Right cardiac atrium (tissue), 5 donors: ENCODE measurements at regions of chr17 and their contacts with region 1.

Region 1: DNA sequence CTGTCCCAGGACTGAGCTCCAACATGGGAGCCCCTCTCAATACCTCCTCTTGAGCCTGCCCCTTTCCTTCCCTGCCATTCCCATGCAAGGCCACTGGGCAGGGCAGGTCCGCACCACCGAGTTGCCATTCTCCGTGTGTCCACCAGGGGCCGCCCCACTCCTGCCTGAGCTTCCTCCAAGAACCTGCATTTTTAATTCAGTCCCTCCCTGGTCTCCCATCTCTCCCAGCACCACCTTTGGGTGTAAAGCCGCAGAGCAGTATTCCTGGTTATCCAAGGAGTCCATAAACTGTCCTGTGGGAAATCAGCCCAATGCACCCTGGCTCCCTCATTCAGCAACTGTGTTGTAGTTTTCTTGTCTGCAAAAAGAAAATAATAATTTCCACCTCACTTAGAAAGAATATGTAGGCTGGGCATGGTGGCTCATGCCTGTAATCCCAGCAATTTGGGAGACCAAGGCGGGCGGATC is 15.9 kb upstream of the ANKRD40CL start:
- DNase-seq: peak; percentile 81 to 94 (median 93)
- ATAC-seq: peak; percentile 82 to 89
- H3K4me3 ChIP-seq: no peak overlapping the region
- H3K27ac ChIP-seq: no peak overlapping the region
- H3K4me1 ChIP-seq: peaks cover 3% of the 10 kb centered on the region
- H3K27me3 ChIP-seq: no peaks in the 10 kb centered on the region

Region 2: DNA sequence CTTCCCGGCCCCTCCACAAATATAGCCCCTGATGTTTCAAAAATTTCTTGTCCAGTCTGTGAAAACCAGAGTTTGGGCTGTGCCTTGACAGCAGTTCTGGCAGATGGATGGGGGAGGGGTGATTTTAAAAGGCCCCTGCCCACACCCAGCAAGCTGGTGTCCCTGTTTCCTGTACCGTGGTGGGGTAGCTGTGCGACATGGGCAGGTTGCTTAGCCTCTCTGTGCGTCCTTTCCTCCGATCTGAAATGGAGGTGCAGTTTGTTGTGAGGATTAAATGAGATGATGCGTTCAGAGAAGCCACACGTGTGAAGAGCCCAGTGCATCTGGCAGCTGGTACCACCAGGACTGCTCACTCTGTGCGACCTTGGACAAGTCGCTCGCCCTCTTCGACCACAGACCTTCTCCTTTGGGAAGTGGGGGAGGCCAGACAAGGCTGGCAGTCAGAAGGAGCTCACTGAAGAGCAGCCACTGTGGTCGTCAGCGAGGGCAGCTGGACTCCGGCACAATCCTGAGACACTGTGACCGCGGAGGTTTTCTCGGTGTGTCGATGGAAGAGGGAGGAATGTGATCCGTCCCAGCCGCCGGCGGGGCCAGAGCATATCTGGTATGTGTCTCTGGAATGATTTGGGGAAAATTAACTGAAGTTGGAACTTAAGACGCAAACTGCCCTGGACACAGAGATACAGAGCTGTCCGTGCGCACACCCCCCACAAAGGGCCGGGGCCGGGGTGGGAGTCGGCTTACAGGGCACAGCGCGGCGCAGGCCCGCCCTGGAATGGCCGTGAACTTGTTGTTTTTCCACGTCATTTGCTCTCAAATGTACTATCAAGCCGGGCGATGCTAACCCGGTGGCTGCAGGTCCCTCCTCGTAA is 51.4 kb after region 1 on chr17:
- intact Hi-C with region 1: loop called in 1 of 4 experiments (anchors 2 kb)
- DNase-seq: peak in 1 of 3 donors; percentile 81
- ATAC-seq: peak; percentile 25 to 40
- H3K4me3 ChIP-seq: peak overlapping the region; percentile 25
- H3K27ac ChIP-seq: no peak overlapping the region
- H3K4me1 ChIP-seq: peaks cover 4% of the 10 kb centered on the region
- H3K27me3 ChIP-seq: no peaks in the 10 kb centered on the region

Region 3: GRCh38 chr17:50841949-50842354 is 58.7 kb after region 1 on chr17:
- intact Hi-C with region 1: loop called (anchors 2 to 5 kb)
- DNase-seq: peak; percentile 57 to 85 (median 84)
- ATAC-seq: peak; percentile 69 to 73
- H3K4me3 ChIP-seq: no peak overlapping the region
- H3K27ac ChIP-seq: no peak overlapping the region
- H3K4me1 ChIP-seq: peaks cover 2% of the 10 kb centered on the region
- H3K27me3 ChIP-seq: no peaks in the 10 kb centered on the region

Region 4: GRCh38 chr17:50949989-50950881 is 167.0 kb after region 1 on chr17:
- intact Hi-C with region 1: loop called in 2 of 4 experiments (anchors 5 to 10 kb)
- DNase-seq: peak; percentile 77 to 91 (median 89)
- ATAC-seq: peak; percentile 78 to 83
- H3K4me3 ChIP-seq: no peak overlapping the region
- H3K27ac ChIP-seq: peak overlapping the region; percentile 58
- H3K4me1 ChIP-seq: peaks cover 11% of the 10 kb centered on the region
- H3K27me3 ChIP-seq: no peaks in the 10 kb centered on the region

Region 5: GRCh38 chr17:50956750-50957523 is 173.7 kb after region 1 on chr17:
- intact Hi-C with region 1: loop called in 3 of 4 experiments (anchors 2 to 10 kb)
- DNase-seq: peak; percentile 63 to 89 (median 83)
- ATAC-seq: peak; percentile 67 to 78
- H3K4me3 ChIP-seq: no peak overlapping the region
- H3K27ac ChIP-seq: no peak overlapping the region
- H3K4me1 ChIP-seq: no peaks in the 10 kb centered on the region
- H3K27me3 ChIP-seq: no peaks in the 10 kb centered on the region